Activated CD4-positive, alpha-beta T cell treated with anti-CD3 and anti-CD28 coated beads for 36 hours (primary cell): ENCODE measurements at regions of chr1 and their contacts with region 1.

Region 1: DNA sequence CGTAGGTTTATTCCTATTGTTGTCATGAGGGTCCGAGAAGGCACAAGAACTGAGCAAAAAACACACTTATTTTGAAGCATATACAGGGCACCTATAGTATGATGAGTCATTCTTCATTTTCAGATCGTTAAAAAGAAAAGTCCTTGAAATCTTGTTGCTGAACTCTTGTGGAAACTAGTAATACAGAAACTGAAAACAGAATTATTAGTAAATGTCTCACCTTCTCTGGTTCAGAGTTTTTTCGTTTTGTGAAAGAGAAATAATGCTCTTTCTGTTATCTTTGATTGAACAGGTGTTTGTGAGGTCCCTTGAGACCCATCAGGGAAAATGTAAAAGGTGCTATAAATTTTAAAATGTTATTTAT is 102.0 kb upstream of the COA6 start:
- DNase-seq: no peak
- ATAC-seq: peak; percentile 93
- H3K4me3 Mint-ChIP-seq: no peak overlapping the region
- H3K27ac Mint-ChIP-seq: no peak overlapping the region
- H3K4me1 Mint-ChIP-seq: peaks cover 30% of the 10 kb centered on the region
- H3K27me3 Mint-ChIP-seq: peaks cover 19% of the 10 kb centered on the region

Region 2: GRCh38 chr1:233598891-233599541 is 672.2 kb before region 1 on chr1:
- CTCF ChIA-PET with region 1: no interaction called
- POLR2A ChIA-PET with region 1: no interaction called
- intact Hi-C with region 1: loop called in 1 of 2 experiments (anchors 2 kb)
- DNase-seq: peak; percentile 69
- ATAC-seq: peak; percentile 82
- H3K4me3 Mint-ChIP-seq: no peak overlapping the region
- H3K27ac Mint-ChIP-seq: peak overlapping the region; percentile 78
- H3K4me1 Mint-ChIP-seq: peaks cover 31% of the 10 kb centered on the region
- H3K27me3 Mint-ChIP-seq: peaks cover 15% of the 10 kb centered on the region

Region 3: DNA sequence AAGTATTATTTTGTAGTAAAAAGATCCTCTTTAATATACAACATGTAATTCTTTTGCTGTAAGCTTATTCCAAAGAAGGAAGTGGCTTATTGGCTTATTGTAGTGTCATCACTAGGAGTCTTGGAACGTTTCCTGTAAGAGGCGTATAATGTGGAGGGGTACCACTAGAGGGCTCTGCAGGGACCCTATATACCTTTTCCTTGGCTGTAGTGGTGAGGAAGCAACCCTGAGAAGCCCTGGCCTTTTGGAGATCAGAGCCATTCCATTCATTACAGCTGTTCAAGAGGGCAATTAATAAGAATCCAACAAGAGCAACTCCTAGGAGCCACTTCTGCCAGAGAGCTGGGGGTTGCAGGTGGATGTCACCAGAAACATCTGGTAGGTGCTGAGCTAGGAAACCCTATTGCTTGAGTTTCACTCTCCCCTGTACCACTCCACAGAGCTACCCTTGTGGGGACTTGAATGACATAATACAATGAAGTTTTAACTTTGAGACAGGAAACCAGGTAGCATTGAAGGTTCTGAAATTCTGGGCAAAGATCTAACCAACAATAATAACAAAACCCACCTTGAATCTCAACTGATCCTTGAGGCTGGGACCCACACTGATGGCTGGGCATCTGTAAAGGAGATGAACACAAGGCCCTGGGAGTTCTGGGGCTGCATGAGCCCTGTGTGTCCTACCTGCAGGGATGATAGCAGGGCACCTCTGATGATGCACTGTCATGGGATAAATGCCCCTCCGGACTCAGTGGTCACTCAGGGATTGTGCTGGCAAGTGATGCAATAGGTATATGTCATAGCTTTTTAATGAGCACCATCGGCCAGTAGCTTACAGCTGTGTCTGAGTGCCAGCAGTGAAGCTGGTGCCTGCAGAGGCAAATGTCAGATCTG is 58.2 kb before region 1 on chr1:
- CTCF ChIA-PET with region 1: interaction called, 3 read pairs
- POLR2A ChIA-PET with region 1: no interaction called
- intact Hi-C with region 1: loop called (anchors 2 to 5 kb)
- DNase-seq: peak; percentile 47
- ATAC-seq: peak; percentile 65
- H3K4me3 Mint-ChIP-seq: no peak overlapping the region
- H3K27ac Mint-ChIP-seq: no peak overlapping the region
- H3K4me1 Mint-ChIP-seq: peaks cover 21% of the 10 kb centered on the region
- H3K27me3 Mint-ChIP-seq: peaks cover 31% of the 10 kb centered on the region

Region 4: GRCh38 chr1:234244482-234244881 is 26.7 kb before region 1 on chr1:
- CTCF ChIA-PET with region 1: no interaction called
- POLR2A ChIA-PET with region 1: no interaction called
- intact Hi-C with region 1: loop called (anchors 1 kb)
- DNase-seq: no peak
- ATAC-seq: peak; percentile 48
- H3K4me3 Mint-ChIP-seq: no peak overlapping the region
- H3K27ac Mint-ChIP-seq: no peak overlapping the region
- H3K4me1 Mint-ChIP-seq: peaks cover 20% of the 10 kb centered on the region
- H3K27me3 Mint-ChIP-seq: peaks cover 15% of the 10 kb centered on the region

Region 5: DNA sequence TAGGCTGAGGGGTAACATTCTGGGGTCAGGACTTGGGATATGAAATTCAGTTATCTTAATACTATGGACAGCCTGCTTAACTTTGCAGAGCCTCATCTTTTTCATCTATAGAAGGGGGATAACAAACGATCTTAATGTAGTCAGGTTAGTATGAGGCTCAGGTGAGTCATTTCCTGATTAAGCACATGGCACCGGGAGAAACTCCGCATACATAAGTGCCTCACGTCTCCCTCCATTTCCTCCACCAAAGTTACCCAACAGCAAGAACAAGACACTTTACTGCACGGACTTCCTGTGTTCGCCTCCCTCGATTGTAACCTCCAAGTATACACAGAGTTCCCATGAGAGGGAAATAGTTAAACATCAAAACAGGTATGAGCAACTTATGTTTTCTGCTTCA is 10.6 kb before region 1 on chr1:
- CTCF ChIA-PET with region 1: interaction called, 6 read pairs
- POLR2A ChIA-PET with region 1: no interaction called
- intact Hi-C with region 1: loop called in 1 of 2 experiments (anchors 1 kb)
- DNase-seq: peak; percentile 53
- ATAC-seq: peak; percentile 94
- H3K4me3 Mint-ChIP-seq: no peak overlapping the region
- H3K27ac Mint-ChIP-seq: peak overlapping the region; percentile 76
- H3K4me1 Mint-ChIP-seq: peaks cover 22% of the 10 kb centered on the region
- H3K27me3 Mint-ChIP-seq: peaks cover 11% of the 10 kb centered on the region

Region 6: GRCh38 chr1:234315091-234315541 is 43.9 kb after region 1 on chr1:
- CTCF ChIA-PET with region 1: interaction called, 11 read pairs
- POLR2A ChIA-PET with region 1: no interaction called
- intact Hi-C with region 1: loop called (anchors 1 kb)
- DNase-seq: peak; percentile 56
- ATAC-seq: peak; percentile 84
- H3K4me3 Mint-ChIP-seq: peak overlapping the region; percentile 22
- H3K27ac Mint-ChIP-seq: peak overlapping the region; percentile 89
- H3K4me1 Mint-ChIP-seq: peaks cover 63% of the 10 kb centered on the region
- H3K27me3 Mint-ChIP-seq: peaks cover 1% of the 10 kb centered on the region